ENCODE measurements at regions of chr20 and their contacts with region 1.

Region 1: DNA sequence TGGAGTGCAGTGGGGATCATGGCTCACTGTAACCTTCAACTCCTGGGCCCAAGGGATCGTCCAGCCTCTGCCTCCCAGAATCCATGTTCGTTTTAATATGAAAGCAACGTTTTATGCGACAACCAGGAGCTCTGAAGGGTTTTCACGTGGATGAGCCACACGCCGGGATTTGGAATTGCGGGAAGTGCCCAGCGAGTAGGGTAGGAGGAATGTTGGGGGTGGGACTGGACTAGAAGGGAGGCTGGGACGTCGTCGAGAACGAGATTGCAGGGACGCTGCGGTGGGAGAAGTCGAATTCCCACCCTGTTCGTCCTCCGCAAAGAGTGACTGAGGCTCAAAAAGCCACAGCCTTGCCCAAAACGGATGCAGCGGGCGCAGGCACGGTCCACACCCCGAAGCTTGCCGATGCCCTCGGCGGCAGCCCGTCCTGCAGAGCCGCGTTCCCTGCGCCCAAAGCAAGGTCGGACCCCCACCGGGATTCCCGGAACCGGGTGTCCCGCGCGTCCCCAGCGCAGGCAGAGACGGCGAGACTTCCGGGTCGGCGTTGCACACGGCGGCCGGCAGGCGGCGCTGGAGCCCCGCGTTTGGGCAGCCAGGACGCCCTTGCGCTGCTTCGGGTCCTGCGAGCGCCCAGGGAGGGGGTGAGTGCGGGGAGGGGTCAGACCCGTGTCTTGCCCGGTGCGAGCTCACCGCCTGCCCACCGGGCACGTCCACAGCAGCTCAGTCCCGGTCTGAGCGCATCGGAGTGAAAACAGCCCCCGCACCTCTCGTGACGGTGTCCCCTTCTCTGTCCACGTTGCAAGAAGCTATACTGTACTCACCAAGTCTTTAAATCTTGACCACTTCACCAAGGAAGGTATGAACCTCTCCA is 87.8 kb downstream of the DHX35 start:
- DNase-seq: peak; percentile 77 to 85
- ATAC-seq: peak; percentile 79 to 92 (median 85)
- H3K4me3 ChIP-seq: peak overlapping the region; percentile 85
- H3K27ac ChIP-seq: no peak overlapping the region
- H3K4me1 ChIP-seq: peaks cover 4% of the 10 kb centered on the region
- H3K27me3 ChIP-seq: no peaks in the 10 kb centered on the region
- CTCF ChIP-seq: peak; percentile 93

Region 2: DNA sequence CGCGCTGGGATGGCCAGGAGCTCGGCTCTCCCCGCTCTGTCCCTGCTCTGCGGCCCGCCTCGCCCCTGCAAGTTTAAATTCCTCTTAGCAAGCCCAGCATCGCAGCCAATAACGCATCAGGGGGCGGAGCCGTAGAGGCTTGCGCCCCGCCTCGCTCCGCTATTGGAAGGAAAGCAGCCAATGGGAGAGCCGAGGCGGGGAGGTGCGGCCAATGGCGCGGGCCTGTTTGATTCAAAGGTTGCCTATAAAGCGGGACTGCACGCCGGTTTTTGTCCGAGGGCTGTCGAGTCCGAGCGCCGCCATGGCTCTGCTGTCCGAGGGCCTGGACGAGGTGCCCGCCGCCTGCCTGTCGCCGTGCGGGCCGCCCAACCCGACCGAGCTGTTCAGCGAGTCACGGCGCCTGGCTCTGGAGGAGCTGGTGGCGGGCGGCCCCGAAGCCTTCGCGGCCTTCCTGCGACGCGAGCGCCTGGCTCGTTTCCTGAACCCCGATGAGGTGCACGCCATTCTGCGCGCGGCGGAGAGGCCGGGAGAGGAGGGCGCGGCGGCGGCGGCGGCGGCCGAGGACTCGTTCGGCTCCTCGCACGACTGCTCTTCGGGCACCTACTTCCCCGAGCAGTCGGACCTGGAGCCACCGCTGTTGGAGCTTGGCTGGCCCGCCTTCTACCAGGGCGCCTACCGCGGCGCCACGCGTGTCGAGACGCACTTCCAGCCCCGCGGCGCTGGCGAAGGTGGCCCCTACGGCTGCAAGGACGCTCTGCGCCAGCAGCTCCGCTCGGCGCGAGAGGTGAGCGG is 123.6 kb before region 1 on chr20 and contains the start of gene FAM83D:
- intact Hi-C with region 1: loop called in 1 of 2 experiments (anchors 10 kb)
- DNase-seq: peak; percentile 89 to 94
- ATAC-seq: peak; percentile 95 to 98 (median 98)
- H3K4me3 ChIP-seq: peak within 1 kb of the TSS; percentile 67
- H3K27ac ChIP-seq: no peak within 1 kb of the TSS
- H3K4me1 ChIP-seq: peaks cover 8% of the 10 kb centered on the region
- H3K27me3 ChIP-seq: peaks cover 0 to 18% (median 2%) of the 10 kb centered on the region in 3 donors
- CTCF ChIP-seq: no peak
- total RNA-seq, gene FAM83D: 0.11 to 0.12 TPM in 2 of 4 donors, not detected in the others

Region 3: GRCh38 chr20:39081255-39081654 is 31.3 kb after region 1 on chr20:
- intact Hi-C with region 1: loop called (anchors 1 to 5 kb)
- DNase-seq: peak; percentile 76 to 80
- ATAC-seq: peak; percentile 65 to 84 (median 78)
- H3K4me3 ChIP-seq: no peak overlapping the region
- H3K27ac ChIP-seq: no peak overlapping the region
- H3K4me1 ChIP-seq: no peaks in the 10 kb centered on the region
- H3K27me3 ChIP-seq: no peaks in the 10 kb centered on the region
- CTCF ChIP-seq: peak; percentile 93

Region 4: GRCh38 chr20:39124064-39124463 is 74.1 kb after region 1 on chr20:
- intact Hi-C with region 1: no loop called
- DNase-seq: no peak
- ATAC-seq: no peak
- H3K4me3 ChIP-seq: no peak overlapping the region
- H3K27ac ChIP-seq: no peak overlapping the region
- H3K4me1 ChIP-seq: no peaks in the 10 kb centered on the region
- H3K27me3 ChIP-seq: no peaks in the 10 kb centered on the region
- CTCF ChIP-seq: no peak

Measured in psoas muscle (tissue), 8 donors.